CD14-positive monocyte (primary cell): ENCODE measurements at regions of chr20 and their contacts with region 1.

Region 1: GRCh38 chr20:50115591-50116372 is 2.8 kb upstream of the UBE2V1 start:
- DNase-seq: peak; percentile 87 to 96 (median 90)
- H3K4me3 ChIP-seq: peak overlapping the region; percentile 49 to 82 (median 75)
- H3K4me3 Mint-ChIP-seq: peak overlapping the region; percentile 74 to 89
- H3K27ac ChIP-seq: peak overlapping the region in 1 of 2 donors; percentile 78
- H3K27ac Mint-ChIP-seq: peak overlapping the region; percentile 71 to 96 (median 92)
- H3K4me1 ChIP-seq: peaks cover 37 to 53% of the 10 kb centered on the region in 2 donors
- H3K4me1 Mint-ChIP-seq: peaks cover 52% of the 10 kb centered on the region
- H3K27me3 ChIP-seq: no peaks in the 10 kb centered on the region
- H3K27me3 Mint-ChIP-seq: peaks cover 0 to 4% (median 2%) of the 10 kb centered on the region in 3 donors
- CTCF ChIP-seq: no peak

Region 2: GRCh38 chr20:50286609-50287008 is 170.8 kb after region 1 on chr20:
- intact Hi-C with region 1: loop called in 1 of 2 experiments (anchors 10 kb)
- DNase-seq: no peak
- H3K4me3 ChIP-seq: no peak overlapping the region
- H3K4me3 Mint-ChIP-seq: peak overlapping the region in 1 of 2 donors; percentile 24
- H3K27ac ChIP-seq: no peak overlapping the region
- H3K27ac Mint-ChIP-seq: peak overlapping the region in 1 of 7 donors; percentile 50
- H3K4me1 ChIP-seq: peaks cover 48 to 50% of the 10 kb centered on the region in 2 donors
- H3K4me1 Mint-ChIP-seq: peaks cover 60% of the 10 kb centered on the region
- H3K27me3 ChIP-seq: no peaks in the 10 kb centered on the region
- H3K27me3 Mint-ChIP-seq: peaks cover 0 to 8% (median 4%) of the 10 kb centered on the region in 3 donors
- CTCF ChIP-seq: no peak

Region 3: DNA sequence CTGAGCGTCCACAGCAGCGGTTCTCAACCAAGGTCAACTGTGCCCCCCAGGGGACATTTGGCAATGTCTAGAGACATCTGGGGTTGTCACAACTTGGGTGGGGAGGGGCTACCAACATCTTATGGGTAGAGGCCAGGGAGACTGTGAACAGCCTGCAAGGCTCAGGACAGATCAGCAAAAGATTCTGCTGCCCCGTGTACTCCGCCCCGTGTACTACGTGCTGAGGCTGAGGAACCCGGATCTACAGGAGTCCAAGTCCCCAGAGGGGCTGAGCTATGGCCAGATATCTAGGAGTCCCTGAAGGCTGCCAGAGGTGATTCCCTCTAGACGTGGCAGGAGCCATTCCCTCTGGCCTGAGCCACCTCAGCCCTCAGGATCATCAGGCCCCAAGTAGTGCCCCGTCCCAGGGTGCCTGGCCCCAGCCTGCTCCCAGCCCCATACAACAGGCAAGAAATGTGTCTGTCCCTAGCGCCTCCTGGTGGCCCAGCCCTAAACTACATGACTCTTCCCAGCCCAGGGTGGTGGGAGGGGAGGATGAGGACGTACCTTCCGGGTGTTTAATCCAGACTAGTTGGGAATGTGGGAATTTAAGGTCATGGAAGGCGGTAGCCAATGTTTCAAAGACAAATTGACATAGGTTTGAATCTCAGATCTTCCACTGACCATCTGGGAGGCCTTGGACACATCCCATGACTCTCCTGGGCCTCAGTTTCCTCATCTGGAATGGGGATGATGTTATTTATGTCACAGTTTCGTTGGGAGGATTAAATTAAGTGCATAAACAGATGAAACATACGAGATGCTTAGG is 344.9 kb after region 1 on chr20:
- intact Hi-C with region 1: loop called in 1 of 2 experiments (anchors 10 kb)
- DNase-seq: peak; percentile 76 to 85 (median 82)
- H3K4me3 ChIP-seq: no peak overlapping the region
- H3K4me3 Mint-ChIP-seq: peak overlapping the region in 1 of 2 donors; percentile 53
- H3K27ac ChIP-seq: peak overlapping the region in 1 of 2 donors; percentile 34
- H3K27ac Mint-ChIP-seq: peak overlapping the region; percentile 58 to 81 (median 73)
- H3K4me1 ChIP-seq: peaks cover 50 to 54% of the 10 kb centered on the region in 2 donors
- H3K4me1 Mint-ChIP-seq: peaks cover 60% of the 10 kb centered on the region
- H3K27me3 ChIP-seq: no peaks in the 10 kb centered on the region
- H3K27me3 Mint-ChIP-seq: peaks cover 0 to 3% (median 2%) of the 10 kb centered on the region in 3 donors
- CTCF ChIP-seq: peak; percentile 95